ENCODE measurements at regions of chr1 and their contacts with region 1.

Region 1: GRCh38 chr1:84012018-84012417 is 13.1 kb upstream of the TTLL7 start:
- DNase-seq: no peak
- ATAC-seq: no peak
- H3K4me3 ChIP-seq: no peak overlapping the region
- H3K27ac ChIP-seq: no peak overlapping the region
- H3K4me1 ChIP-seq: no peaks in the 10 kb centered on the region
- H3K27me3 ChIP-seq: no peaks in the 10 kb centered on the region
- CTCF ChIP-seq: no peak

Region 2: DNA sequence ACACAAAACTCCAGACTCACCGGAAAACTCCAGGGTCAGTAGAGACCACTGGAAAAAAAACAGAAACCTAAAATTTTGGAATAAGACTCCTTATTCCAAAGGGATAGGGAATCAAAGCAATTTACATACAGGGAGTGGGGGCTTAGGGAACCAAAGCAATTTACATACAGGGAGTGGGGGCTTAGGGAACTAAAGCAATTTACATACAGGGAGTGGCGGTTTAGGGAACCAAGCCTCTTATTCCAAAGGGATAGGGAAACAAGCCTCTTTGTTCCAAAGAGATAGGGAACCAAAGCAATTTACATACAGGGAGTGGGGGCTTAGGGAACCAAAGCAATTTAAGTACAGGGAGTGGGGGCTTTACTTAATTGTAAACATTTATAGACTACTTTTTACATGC is 15.3 kb after region 1 on chr1:
- intact Hi-C with region 1: loop called in 1 of 2 experiments (anchors 2 kb)
- DNase-seq: no peak
- ATAC-seq: no peak
- H3K4me3 ChIP-seq: no peak overlapping the region
- H3K27ac ChIP-seq: no peak overlapping the region
- H3K4me1 ChIP-seq: no peaks in the 10 kb centered on the region
- H3K27me3 ChIP-seq: no peaks in the 10 kb centered on the region
- CTCF ChIP-seq: no peak

Region 3: DNA sequence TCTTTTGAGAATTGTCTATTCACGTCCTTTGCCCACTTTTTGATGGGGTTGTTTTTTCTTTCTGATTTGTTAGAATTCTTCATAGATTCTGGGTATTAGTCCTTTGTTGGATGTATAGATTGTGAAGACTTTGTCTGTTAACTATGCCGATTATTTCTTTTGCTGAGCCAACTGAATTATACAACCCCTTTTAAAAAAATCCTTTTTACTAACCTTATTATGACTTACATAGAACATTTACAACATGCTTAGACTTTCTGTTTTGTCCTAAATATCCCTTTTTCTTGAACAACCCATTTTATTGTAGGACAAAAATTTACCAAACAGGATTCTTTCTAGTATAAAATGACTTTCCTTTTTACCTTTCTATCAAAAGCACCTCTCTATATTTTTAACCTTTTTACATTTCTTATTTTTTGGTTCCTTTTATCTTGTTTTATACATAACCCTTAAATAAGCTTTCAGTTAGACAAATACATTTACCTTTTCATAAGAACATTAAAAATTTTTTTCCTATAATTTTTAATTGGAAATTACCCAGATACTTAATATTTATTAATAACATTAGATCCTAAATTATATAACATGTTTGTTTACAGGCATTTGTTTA is 57.3 kb after region 1 on chr1:
- intact Hi-C with region 1: no loop called
- DNase-seq: no peak
- ATAC-seq: no peak
- H3K4me3 ChIP-seq: no peak overlapping the region
- H3K27ac ChIP-seq: no peak overlapping the region
- H3K4me1 ChIP-seq: no peaks in the 10 kb centered on the region
- H3K27me3 ChIP-seq: peaks cover 0 to 4% (median 0%) of the 10 kb centered on the region in 3 donors
- CTCF ChIP-seq: no peak

Measured in psoas muscle (tissue), 8 donors.